Activated CD8-positive, alpha-beta T cell treated with anti-CD3 and anti-CD28 coated beads, Interleukin-2, amount 10 ng/mL, durations not matched to agents 7 days and 5 days (primary cell): ENCODE measurements at regions of chr15 and their contacts with region 1.

Region 1: GRCh38 chr15:89430530-89431341 is 65.6 kb downstream of the RHCG start:
- DNase-seq: peak; percentile 90
- ATAC-seq: peak; percentile 96
- H3K4me3 Mint-ChIP-seq: peak overlapping the region; percentile 69
- H3K27ac Mint-ChIP-seq: no peak overlapping the region
- H3K4me1 Mint-ChIP-seq: peaks cover 5% of the 10 kb centered on the region
- H3K27me3 Mint-ChIP-seq: peaks cover 21% of the 10 kb centered on the region

Region 2: DNA sequence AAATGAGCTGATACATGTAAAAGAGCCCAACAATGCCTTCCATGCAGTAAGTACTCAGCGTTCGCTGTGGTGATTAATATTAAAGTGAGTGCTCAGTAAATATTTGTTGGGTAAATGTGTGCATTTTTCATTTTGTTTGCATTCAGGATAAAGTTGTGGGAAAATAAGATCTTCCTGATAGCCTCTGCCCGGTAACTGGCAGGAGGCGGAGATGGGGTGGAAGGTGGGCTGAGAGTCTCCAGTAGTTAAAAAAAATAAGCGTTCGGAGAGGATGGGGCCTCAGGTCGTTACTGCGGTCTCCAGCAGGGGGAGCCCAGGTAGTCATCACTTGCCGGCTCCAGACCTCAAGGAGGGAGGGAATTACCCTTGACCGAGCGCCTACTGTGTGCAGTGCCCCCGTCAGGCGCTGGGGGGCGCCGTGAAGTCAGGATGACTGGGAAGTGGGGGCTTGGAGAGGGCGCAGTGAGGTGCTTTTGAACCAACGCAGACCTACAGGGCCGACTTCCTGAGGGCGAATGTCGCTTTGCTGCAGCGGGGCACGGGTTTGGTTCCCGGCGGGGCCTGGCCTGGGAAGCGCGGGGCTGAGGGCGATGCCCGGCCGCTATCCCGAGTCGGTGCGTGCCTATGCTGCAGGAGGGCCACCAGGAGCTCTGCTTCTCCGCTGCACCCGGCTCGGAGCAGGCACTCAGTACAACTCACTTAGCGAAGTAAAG is 14.4 kb before region 1 on chr15:
- CTCF ChIA-PET with region 1: interaction called, 19 read pairs
- POLR2A ChIA-PET with region 1: no interaction called
- DNase-seq: peak; percentile 84
- ATAC-seq: peak; percentile 82
- H3K4me3 Mint-ChIP-seq: no peak overlapping the region
- H3K27ac Mint-ChIP-seq: no peak overlapping the region
- H3K4me1 Mint-ChIP-seq: peaks cover 8% of the 10 kb centered on the region
- H3K27me3 Mint-ChIP-seq: peaks cover 77% of the 10 kb centered on the region

Region 3: GRCh38 chr15:89442671-89443307 is 12.1 kb after region 1 on chr15:
- CTCF ChIA-PET with region 1: interaction called, 12 read pairs
- POLR2A ChIA-PET with region 1: no interaction called
- DNase-seq: peak; percentile 70
- ATAC-seq: peak; percentile 60
- H3K4me3 Mint-ChIP-seq: no peak overlapping the region
- H3K27ac Mint-ChIP-seq: no peak overlapping the region
- H3K4me1 Mint-ChIP-seq: peaks cover 5% of the 10 kb centered on the region
- H3K27me3 Mint-ChIP-seq: peaks cover 10% of the 10 kb centered on the region

Region 4: DNA sequence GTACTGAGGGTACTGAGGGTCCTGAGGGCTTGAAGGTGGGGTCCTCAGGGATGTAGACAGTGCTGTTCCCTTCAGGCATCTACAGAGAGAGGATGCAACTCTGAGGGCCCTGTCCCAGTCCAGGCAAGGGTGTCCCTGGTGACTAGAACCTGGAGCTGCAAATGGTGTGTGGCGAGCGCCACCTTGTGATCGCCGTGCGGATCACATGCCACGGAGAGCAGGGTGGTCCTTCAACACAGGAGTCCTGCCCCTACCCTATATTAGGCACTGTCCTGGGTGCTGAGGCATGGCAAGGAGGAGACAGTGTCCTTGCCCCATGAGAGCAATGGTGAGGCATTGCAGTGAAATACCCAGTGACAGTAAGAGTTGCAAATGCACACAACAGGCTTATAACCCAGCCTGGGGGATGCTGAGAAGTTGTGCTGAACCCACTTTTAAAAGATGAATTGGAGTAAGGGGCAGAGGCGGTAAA is 42.1 kb after region 1 on chr15:
- CTCF ChIA-PET with region 1: interaction called, 13 read pairs
- POLR2A ChIA-PET with region 1: no interaction called
- DNase-seq: peak; percentile 60
- ATAC-seq: peak; percentile 75
- H3K4me3 Mint-ChIP-seq: no peak overlapping the region
- H3K27ac Mint-ChIP-seq: no peak overlapping the region
- H3K4me1 Mint-ChIP-seq: no peaks in the 10 kb centered on the region
- H3K27me3 Mint-ChIP-seq: peaks cover 26% of the 10 kb centered on the region